ENCODE measurements at regions of chr5 and their contacts with region 1.

Region 1: DNA sequence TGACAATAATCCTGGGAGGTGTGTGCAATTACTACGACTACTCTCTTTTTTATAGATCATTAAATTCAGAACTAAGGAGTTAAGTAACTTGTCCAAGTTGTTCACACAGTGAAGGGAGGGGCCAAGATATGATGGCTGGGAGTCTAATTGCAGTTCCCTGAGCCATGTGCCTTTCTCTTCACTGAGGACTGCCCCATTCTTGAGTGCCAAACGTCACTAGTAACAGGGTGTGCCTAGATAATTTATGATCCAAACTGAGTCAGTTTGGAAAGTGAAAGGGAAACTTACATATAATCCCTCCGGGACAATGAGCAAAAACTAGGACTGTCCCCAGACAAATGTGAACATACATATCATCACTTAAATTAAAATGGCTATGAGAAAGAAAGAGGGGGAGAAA is 20.2 kb downstream of the IL7R start:
- DNase-seq: no peak

Region 2: GRCh38 chr5:35898952-35899660 is 22.2 kb after region 1 on chr5:
- intact Hi-C with region 1: loop called in 1 of 2 experiments (anchors 1 kb)
- DNase-seq: no peak